ENCODE measurements at regions of chr14 and their contacts with region 1.

Region 1: DNA sequence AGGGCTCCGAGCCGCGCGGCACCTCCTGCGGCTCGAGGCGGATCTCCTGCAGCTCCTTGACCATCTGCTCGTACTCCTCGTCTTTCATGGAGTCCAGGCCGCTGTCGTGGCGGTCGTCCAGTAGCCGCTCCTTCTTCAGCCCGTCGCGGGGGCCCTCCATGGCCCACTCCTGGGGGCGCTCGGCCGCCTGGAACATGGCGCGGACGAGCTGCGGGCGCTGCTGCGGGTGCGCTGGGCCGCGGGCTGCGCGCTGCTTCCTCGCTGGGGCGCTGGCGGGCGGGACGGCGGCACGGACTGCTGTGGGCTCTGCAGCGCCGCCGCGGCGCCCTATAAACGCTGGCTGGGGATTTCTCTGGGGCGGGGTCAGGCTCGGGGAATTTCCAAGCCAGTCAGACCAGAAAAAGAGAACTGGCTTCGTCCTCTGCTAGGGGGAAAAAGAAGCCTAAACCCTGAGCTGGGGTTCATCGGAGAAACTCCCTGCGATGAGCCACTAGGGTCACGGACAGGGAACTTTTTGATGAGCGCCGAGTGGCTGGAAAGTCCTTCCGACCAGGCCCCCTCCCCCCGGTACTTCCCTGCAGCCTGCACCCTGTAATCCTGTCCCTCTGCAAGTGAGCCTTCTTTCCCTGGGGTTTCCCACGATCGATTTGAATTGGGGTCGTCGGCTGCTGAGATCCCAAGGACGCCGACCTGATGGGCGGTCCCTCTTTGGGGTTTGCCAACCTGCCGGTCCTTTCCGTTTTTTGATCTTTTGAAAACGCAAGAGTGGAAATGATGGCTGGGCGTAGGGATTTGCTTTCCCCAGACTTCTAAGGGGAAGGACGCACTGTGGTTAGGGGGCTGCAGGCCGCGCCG is at the start of gene NFKBIA:
- DNase-seq: peak; percentile 88
- CTCF ChIP-seq: peak; percentile 47

Region 2: GRCh38 chr14:35121887-35122695 is 282.6 kb before region 1 on chr14 and contains the starts of genes PPP2R3C and PRORP:
- CTCF ChIA-PET with region 1: interaction called, 3 read pairs
- POLR2A ChIA-PET with region 1: interaction called, 14 read pairs
- DNase-seq: peak; percentile 93
- CTCF ChIP-seq: no peak

Region 3: DNA sequence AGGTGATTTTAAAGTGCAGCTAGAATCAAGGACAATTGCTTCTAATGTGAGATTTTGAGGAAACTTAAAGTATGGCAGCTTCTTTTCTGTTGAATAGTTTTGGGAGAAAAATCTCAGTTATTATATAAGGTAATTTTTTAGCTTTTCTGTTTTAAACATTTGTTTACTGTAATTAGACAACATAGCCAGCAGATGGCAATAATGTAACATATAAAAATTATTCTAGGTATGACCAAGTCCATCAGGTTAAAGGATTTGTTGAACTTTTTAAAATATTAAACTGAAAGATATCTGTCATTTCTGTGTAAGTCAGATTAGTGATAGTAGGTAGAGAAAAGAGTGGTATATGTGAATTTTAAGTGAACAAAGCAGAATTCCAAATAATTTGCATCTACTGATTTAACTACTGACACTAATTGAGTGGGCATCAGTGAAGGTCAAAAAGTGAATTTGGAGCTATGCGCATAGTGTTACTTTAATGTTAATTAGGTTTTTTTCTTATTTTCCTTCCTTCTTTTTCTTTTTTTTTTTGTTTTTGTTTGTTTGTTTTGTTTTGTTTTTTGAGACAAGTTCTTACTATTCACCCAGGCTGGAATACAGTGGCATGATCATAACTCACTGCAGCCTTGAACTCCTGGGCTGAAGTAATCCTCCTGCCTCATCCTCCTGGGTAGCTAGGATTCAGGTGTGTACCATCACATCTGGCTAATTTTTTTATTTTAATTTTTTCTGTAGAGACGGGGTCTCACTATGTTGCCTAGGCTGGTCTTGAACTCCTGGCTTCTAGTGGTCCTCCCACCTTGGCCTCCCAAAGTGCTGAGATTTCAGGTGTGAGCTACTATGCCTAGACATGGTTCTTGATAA is 263.7 kb before region 1 on chr14:
- CTCF ChIA-PET with region 1: interaction called, 356 read pairs
- POLR2A ChIA-PET with region 1: interaction called, 11 read pairs
- DNase-seq: no peak
- CTCF ChIP-seq: peak; percentile 23

Region 4: GRCh38 chr14:35229495-35230089 is 175.1 kb before region 1 on chr14:
- CTCF ChIA-PET with region 1: interaction called, 12 read pairs
- POLR2A ChIA-PET with region 1: interaction called, 4 read pairs
- DNase-seq: peak; percentile 39
- CTCF ChIP-seq: peak; percentile 17

Region 5: DNA sequence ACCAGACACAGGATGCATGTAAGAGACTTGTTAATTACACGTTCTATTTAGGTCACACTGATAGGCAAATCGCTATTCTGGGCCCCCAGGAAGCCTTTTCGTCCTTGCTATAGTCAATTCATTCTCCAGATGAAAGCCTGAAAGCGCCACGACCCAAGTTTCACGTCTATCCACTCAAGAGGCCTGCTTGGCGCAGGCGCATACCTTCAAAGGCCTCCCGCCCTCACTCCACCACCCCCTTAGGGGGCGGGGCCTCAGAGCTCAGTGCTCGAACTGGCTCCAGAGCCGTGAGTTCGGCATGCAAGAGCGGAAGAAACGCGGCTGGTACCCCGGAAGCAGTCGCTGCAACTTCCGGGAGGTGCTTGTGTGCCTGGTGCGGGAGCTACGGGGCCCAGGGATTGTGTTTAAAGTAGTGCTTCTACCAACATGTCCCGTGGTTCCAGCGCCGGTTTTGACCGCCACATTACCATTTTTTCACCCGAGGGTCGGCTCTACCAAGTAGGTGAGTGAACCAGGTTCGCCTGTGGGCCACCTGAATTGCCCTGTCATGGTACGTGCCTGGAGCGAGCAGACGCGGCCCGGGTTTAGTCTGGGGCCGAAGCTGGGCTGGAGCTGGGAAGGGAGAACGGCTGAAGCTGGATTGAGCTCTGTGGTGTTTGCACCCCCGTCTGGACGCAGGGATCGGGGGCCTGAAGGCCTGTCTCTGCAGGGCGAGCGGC is 112.5 kb before region 1 on chr14 and contains the start of gene PSMA6:
- CTCF ChIA-PET with region 1: interaction called, 15 read pairs
- POLR2A ChIA-PET with region 1: interaction called, 41 read pairs
- DNase-seq: peak; percentile 95
- CTCF ChIP-seq: no peak

Region 6: GRCh38 chr14:35320472-35320871 is 84.2 kb before region 1 on chr14:
- CTCF ChIA-PET with region 1: no interaction called
- POLR2A ChIA-PET with region 1: interaction called, 14 read pairs
- DNase-seq: no peak
- CTCF ChIP-seq: no peak

Region 7: GRCh38 chr14:35390577-35391387 is 13.9 kb before region 1 on chr14:
- CTCF ChIA-PET with region 1: interaction called, 6 read pairs
- POLR2A ChIA-PET with region 1: interaction called, 15 read pairs
- DNase-seq: no peak
- CTCF ChIP-seq: no peak

Region 8: DNA sequence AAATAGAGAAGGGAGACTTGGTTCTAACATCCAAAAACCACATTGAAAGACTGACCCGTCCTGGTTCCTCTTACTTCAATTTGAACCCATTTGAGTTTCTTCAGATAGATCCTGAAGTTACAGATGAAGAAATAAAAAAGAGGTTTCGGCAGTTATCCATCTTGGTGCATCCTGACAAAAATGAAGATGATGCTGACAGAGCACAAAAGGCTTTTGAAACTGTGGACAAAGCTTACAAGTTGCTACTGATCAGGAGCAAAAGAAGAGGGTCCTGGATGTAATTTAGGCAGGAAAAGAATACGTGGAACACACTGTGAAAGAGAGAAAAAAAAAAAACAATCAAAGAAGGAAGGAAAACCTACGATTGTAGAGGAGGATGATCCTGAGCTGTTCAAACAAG is 25.3 kb after region 1 on chr14:
- CTCF ChIA-PET with region 1: no interaction called
- POLR2A ChIA-PET with region 1: no interaction called
- DNase-seq: no peak
- CTCF ChIP-seq: no peak

Region 9: DNA sequence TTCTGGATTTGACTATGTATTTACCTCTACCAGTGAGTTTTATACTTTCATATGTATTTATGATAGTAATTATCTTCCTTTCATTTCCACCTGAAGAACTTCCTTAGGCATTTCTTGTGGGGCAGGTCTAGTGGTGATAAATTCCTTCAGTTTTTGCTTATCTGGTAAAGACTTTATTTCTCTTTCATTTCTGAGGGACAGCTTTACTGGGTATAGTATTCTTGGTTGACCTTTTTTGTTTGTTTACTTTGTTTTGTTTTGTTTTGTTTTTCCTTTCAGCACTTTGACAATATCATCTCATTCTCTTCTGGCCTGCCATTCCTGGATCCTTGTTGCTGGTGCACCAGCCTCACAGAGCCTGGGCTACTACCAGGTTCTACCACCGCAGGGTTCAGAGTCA is 53.8 kb after region 1 on chr14:
- CTCF ChIA-PET with region 1: no interaction called
- POLR2A ChIA-PET with region 1: no interaction called
- DNase-seq: no peak
- CTCF ChIP-seq: no peak

Region 10: GRCh38 chr14:36035675-36036074 is 631.0 kb after region 1 on chr14:
- CTCF ChIA-PET with region 1: no interaction called
- POLR2A ChIA-PET with region 1: no interaction called
- DNase-seq: no peak
- CTCF ChIP-seq: no peak

Measured in GM10248 (cell line).